SK-N-SH (cell line): ENCODE measurements at regions of chr17 and their contacts with region 1.

Region 1: GRCh38 chr17:45098869-45099616 is 33.3 kb downstream of the PLCD3 start:
- DNase-seq: peak; percentile 93
- H3K4me3 ChIP-seq: no peak overlapping the region; a peak in 1 of 4 replicates
- H3K27ac ChIP-seq: peak overlapping the region in 1 of 2 experiments; percentile 19; a peak in 1 of 4 replicates
- H3K4me1 ChIP-seq: peaks cover 0 to under 1% of the 10 kb centered on the region in 2 experiments; a peak in 1 of 4 replicates
- H3K27me3 ChIP-seq: no peaks in the 10 kb centered on the region
- CTCF ChIP-seq: peak; percentile 91
- EP300 ChIP-seq: no peak
- RAD21 ChIP-seq: peak; percentile 83

Region 2: DNA sequence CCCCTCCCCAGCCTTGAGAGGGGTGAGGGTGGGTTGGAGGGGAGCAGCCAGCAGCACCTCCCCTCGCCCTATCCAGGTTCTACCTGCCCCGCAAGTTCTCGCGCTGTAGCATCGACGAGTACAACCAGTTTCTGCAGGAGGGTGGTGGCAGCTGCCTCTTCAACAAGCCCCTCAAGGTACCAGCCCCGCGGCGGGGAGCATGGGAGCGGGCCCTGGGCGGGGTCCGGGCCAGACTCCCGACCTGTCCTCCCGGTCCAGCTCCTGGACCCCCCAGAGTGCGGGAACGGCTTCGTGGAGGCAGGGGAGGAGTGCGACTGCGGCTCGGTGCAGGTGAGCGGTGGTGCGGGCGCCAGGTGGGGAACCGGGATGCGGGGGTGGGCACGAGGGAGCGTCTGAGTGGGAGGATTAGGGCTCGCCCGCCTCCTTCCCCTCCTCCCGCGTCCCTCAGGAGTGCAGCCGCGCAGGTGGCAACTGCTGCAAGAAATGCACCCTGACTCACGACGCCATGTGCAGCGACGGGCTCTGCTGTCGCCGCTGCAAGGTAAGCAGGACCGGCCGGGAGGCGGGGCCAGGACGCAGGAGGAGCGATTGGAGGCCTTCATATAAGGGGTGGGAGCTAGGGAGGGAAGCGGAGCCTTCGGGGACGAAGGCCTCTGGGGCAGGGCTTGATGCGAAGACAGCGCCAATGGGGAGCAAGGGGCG is 323.8 kb before region 1 on chr17:
- CTCF ChIA-PET with region 1: interaction called, 11 read pairs
- POLR2A ChIA-PET with region 1: no interaction called
- DNase-seq: peak; percentile 98
- H3K4me3 ChIP-seq: peak overlapping the region; percentile 64 to 84
- H3K27ac ChIP-seq: no peak overlapping the region
- H3K4me1 ChIP-seq: peaks cover 0 to 31% of the 10 kb centered on the region in 2 experiments; a peak in 1 of 4 replicates
- H3K27me3 ChIP-seq: no peaks in the 10 kb centered on the region
- CTCF ChIP-seq: no peak; the same call in 1 of the 2 replicates
- EP300 ChIP-seq: no peak
- RAD21 ChIP-seq: no peak

Region 3: DNA sequence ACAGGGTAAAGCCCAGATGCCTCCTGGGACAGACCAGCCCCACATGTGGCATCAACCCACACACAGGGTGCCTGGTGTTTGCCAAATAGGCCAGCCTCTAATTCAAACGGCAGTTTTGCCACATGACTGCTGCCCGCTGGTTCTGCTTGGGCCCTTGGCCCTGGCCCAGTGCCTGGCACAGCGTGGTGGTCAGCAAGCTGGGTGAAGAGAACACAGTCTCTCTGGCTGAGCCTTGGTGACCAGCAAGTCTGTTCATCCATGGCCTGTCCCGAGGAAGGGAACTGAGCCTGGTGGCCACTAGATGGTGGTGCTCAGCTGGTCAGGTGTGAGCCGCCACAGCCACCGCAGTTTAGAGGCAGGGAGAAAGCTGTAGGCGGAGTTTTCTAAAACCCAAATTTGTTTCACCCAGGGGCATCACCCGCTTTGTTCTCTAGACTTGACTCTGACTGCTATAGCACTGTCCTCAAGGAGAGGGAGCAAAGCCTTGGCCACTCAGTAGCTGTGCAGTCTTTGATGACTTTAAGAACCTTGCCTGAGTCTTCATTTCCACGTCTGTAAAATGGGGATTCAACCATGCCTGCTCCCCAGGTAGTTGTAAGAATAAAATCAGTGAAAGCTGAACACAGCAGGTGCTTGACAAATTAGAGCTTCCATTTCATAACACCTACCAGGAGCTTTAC is 179.0 kb before region 1 on chr17:
- CTCF ChIA-PET with region 1: interaction called, 104 read pairs
- POLR2A ChIA-PET with region 1: no interaction called
- DNase-seq: peak; percentile 89
- H3K4me3 ChIP-seq: no peak overlapping the region; a peak in 1 of 4 replicates
- H3K27ac ChIP-seq: no peak overlapping the region; a peak in 1 of 4 replicates
- H3K4me1 ChIP-seq: peaks cover 18 to 42% of the 10 kb centered on the region in 2 experiments; a peak in 3 of 4 replicates
- H3K27me3 ChIP-seq: no peaks in the 10 kb centered on the region
- CTCF ChIP-seq: peak; percentile 84
- EP300 ChIP-seq: no peak; a peak in 1 of 4 replicates
- RAD21 ChIP-seq: peak; percentile 98

Region 4: DNA sequence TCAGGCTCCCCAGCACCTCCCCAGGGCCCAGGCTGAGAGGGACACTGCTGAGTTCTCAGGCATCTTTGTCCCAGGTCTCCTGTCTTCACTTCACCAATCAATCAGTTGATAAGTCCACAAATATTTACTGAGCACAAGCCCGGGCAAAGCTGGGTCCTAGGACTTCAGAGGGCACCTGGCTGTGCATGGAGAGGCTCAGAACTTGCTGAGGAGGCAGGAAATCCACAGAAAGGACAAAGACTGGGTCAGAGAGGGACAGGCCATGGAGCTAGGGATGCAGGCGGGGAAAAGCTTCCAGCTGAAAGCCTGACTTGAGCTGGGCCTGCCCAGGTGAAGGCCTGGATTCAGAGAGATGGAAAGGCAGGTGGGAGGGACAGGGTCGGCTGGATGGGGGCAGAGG is 97.7 kb before region 1 on chr17:
- CTCF ChIA-PET with region 1: no interaction called
- POLR2A ChIA-PET with region 1: no interaction called
- DNase-seq: no peak
- H3K4me3 ChIP-seq: no peak overlapping the region
- H3K27ac ChIP-seq: no peak overlapping the region
- H3K4me1 ChIP-seq: no peaks in the 10 kb centered on the region; a peak in 1 of 4 replicates
- H3K27me3 ChIP-seq: no peaks in the 10 kb centered on the region
- CTCF ChIP-seq: no peak
- EP300 ChIP-seq: no peak
- RAD21 ChIP-seq: no peak

Region 5: GRCh38 chr17:45060797-45061605 is 38.0 kb before region 1 on chr17 and contains the start of gene NMT1:
- CTCF ChIA-PET with region 1: interaction called, 14 read pairs
- POLR2A ChIA-PET with region 1: interaction called, 3 read pairs
- DNase-seq: peak; percentile 89
- H3K4me3 ChIP-seq: peak within 1 kb of the TSS; percentile 70 to 93
- H3K27ac ChIP-seq: peak within 1 kb of the TSS; percentile 86 to 87
- H3K4me1 ChIP-seq: peaks cover 5 to 7% of the 10 kb centered on the region in 2 experiments; a peak in 1 of 4 replicates
- H3K27me3 ChIP-seq: no peaks in the 10 kb centered on the region
- CTCF ChIP-seq: no peak
- EP300 ChIP-seq: no peak
- RAD21 ChIP-seq: no peak
- polyA plus RNA-seq, gene NMT1: 30.1 and 31.6 TPM in 2 replicates

Region 6: DNA sequence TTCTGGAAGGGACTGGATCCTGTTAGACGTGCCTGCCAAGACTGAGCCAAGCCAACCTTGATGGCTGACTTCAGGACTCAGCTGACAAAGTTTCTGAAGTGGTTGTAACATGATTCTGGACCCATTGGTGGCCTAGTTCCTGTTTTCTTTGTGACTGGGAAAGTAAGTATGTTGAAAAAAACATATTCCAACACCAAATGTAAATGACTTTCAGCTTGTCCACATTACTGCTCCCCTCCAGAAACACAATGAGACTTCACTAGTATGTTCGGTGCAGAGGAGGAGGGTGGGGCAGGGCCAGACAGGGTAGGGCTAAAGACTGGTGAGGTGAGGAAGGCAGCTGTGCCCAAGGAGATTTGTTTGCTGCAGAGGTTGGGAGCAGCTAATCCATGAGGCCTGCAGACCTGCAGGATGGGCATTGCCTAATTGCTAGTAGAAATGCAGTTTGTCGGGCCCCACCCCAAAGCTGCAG is 11.5 kb before region 1 on chr17:
- CTCF ChIA-PET with region 1: interaction called, 25 read pairs
- POLR2A ChIA-PET with region 1: no interaction called
- DNase-seq: no peak
- H3K4me3 ChIP-seq: no peak overlapping the region
- H3K27ac ChIP-seq: peak overlapping the region in 1 of 2 experiments; percentile 37; a peak in 1 of 4 replicates
- H3K4me1 ChIP-seq: no peaks in the 10 kb centered on the region; a peak in 1 of 4 replicates
- H3K27me3 ChIP-seq: no peaks in the 10 kb centered on the region
- CTCF ChIP-seq: no peak
- EP300 ChIP-seq: no peak
- RAD21 ChIP-seq: no peak

Region 7: DNA sequence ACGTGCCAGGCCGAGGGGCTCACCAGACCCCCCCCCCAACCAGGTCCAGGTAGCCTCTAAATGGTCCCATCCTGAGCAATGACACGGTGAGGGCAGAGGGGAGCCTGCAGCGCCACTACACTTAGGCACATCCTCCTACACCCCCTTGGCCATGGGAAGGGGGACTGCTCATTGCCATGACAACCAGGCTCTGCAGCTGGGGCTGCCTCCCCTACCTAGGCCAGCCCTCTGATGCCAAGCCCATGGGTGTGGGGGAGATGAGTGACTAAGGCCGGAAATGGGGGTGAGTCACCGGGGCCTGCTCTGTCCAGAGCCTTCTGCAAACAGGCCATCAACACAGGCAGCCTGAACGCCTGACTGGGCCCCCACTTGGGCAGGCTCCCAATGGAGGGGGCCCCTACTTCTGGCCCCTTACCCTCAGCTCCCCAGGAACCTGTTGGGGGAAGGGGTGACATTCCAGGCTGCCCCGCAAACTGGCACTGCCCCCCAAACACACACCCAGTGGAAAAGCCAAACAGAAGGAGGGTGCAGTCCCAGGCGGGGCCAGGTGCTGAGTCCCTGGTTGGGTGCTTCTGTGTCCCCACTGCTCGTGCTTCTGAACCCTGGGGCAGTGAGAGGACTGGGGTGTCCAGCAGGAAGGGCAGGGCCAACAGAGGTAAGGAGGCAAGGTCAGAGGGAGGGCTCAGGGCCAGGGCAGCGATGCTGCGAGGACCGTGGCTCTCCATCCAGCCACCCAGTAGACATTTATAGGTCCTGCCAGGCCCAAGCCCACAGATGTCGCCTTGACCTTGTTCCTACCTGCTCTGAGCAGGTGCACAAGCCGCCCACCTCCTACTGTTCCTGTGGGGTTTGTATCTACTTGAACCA is 25.1 kb after region 1 on chr17:
- CTCF ChIA-PET with region 1: interaction called, 194 read pairs
- POLR2A ChIA-PET with region 1: no interaction called
- DNase-seq: peak; percentile 80
- H3K4me3 ChIP-seq: no peak overlapping the region
- H3K27ac ChIP-seq: peak overlapping the region; percentile 56 to 93
- H3K4me1 ChIP-seq: peaks cover 36 to 41% of the 10 kb centered on the region in 2 experiments; a peak in 3 of 4 replicates
- H3K27me3 ChIP-seq: no peaks in the 10 kb centered on the region
- CTCF ChIP-seq: no peak
- EP300 ChIP-seq: peak in 1 of 2 experiments; percentile 81; a peak in 2 of 4 replicates
- RAD21 ChIP-seq: no peak

Region 8: DNA sequence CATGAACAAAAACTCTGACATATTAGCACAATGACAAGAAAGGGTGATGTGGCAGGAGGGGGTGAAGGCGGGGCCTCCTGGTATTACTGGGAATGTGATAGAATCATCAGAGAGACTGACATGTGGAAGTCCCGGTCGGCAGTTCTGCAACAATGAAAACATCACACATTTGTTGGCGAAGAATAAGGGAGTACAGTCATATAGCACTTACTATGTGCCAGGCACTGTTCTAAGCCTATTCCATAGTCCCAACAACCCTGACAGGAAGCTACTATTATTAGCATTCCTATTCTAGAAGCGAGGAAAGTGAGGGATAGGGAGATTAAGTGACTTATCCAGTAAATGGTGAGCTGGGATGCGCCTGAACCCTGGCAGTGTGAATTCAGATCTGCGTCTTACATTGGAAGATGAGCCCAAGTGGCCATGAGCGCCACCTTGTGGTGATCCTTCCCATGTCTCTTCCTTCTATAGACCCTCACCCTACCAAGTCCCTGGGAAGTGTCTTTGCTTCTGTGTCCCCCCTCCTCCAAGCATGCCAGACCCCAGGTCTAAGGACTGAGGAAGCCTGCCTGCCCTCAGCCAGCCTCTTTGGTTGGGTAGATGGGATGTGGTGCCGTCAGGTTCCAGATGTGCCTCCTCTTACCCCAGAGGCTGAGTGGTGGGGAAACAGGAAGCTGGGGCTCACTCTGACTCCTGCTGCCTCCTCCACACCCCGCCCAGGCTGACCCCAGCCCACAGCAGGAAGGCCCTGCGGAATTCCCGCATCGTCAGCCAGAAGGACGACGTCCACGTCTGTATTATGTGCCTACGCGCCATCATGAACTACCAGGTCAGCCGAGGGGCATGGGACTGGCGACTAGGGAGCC is 136.6 kb after region 1 on chr17:
- CTCF ChIA-PET with region 1: no interaction called
- POLR2A ChIA-PET with region 1: no interaction called
- DNase-seq: peak; percentile 81
- H3K4me3 ChIP-seq: no peak overlapping the region
- H3K27ac ChIP-seq: no peak overlapping the region
- H3K4me1 ChIP-seq: peaks cover 4 to 16% of the 10 kb centered on the region in 2 experiments; a peak in 2 of 4 replicates
- H3K27me3 ChIP-seq: no peaks in the 10 kb centered on the region
- CTCF ChIP-seq: peak; percentile 83
- EP300 ChIP-seq: no peak
- RAD21 ChIP-seq: peak; percentile 65